Caco-2 (cell line): ENCODE measurements at regions of chr12 and their contacts with region 1.

Region 1: DNA sequence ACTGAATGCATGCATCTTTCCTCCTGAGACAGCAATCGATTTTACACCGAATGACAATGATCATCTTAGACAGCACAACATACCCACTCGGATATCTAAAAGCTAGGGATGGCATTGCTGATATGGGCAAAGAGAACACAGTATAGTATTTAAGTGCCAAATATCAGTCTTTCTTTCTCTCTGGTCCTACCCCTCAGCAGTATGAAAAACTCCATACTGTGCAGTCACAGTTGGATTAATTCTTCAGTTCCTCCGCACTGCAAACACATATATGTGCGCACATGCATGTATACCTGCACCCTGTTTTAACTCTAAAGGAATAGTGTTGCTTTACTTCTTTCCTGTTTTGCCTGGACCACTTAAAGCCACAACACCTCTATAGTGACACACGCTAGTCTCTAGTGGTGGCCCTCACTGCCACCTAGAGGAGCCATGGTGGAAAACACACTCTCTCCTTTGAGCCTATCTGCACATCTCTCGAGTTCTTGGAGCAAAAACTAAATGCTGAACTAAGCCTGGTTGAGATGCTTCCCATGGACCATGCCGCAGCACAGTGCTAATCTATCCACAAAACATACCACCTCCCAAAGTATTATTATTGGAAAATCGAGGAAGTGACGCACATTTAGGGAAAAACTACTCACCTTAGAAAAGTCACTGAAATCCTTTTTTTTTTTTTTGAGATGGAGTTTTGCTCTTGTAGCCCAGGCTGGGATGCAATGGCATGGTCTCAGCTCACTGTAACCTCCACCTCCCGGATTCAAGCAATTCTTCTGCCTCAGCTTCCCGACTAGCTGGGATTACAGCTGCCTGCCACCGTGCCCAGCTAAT is 11.9 kb downstream of the TMEM52B start:
- DNase-seq: peak; percentile 79 to 81
- H3K4me3 ChIP-seq: no peak overlapping the region
- H3K4me3 Mint-ChIP-seq: no peak overlapping the region
- H3K27ac Mint-ChIP-seq: peak overlapping the region; percentile 4
- H3K4me1 ChIP-seq: peaks cover 34% of the 10 kb centered on the region
- H3K4me1 Mint-ChIP-seq: peaks cover 50% of the 10 kb centered on the region
- H3K27me3 ChIP-seq: no peaks in the 10 kb centered on the region
- H3K27me3 Mint-ChIP-seq: no peaks in the 10 kb centered on the region
- CTCF ChIP-seq: peak; percentile 79 to 96

Region 2: DNA sequence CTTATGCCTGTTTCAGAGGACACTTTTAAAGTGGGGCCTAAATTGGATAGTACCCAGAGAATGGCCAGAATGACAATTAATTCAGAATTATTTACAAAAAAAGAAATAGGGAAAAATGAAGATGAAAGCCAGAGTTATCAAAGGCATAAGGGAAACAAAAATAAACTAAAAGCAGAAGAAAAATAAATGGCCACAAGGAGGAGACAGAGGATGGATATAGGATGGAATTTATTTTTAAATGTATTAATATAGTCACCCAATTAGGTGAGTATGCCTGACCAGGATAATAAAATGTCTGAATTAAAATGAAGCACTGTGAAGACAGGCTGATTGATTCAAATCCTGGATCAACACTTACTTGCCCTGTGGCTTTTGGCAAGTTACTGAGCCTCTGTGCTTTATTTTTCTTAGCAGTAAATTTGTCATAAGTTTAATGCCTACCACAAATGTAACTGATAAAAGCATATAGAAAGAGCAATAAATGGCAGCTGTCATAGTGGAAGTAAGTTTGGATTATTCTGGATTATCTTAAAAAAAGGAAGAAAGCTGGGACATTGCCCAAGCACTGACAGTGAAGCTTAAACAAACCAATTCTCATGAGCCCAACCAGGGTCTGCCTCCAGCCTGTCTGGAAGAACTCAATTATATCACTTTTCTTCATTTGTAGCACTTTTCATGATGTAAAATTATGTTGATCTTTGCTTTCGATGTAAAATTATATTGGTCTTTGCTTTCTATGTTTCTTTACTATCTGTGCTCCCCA is 156.8 kb before region 1 on chr12:
- CTCF ChIA-PET with region 1: interaction called, 3 read pairs
- POLR2A ChIA-PET with region 1: no interaction called
- intact Hi-C with region 1: loop called (anchors 2 kb)
- DNase-seq: no peak
- H3K4me3 ChIP-seq: no peak overlapping the region
- H3K4me3 Mint-ChIP-seq: no peak overlapping the region
- H3K27ac Mint-ChIP-seq: no peak overlapping the region
- H3K4me1 ChIP-seq: no peaks in the 10 kb centered on the region
- H3K4me1 Mint-ChIP-seq: no peaks in the 10 kb centered on the region
- H3K27me3 ChIP-seq: no peaks in the 10 kb centered on the region
- H3K27me3 Mint-ChIP-seq: peaks cover 6% of the 10 kb centered on the region
- CTCF ChIP-seq: peak; percentile 33 to 69

Region 3: GRCh38 chr12:10167588-10167987 is 23.2 kb before region 1 on chr12:
- CTCF ChIA-PET with region 1: interaction called, 3 read pairs
- POLR2A ChIA-PET with region 1: interaction called, 10 read pairs
- intact Hi-C with region 1: loop called (anchors 2 kb)
- DNase-seq: peak; percentile 71 to 86
- H3K4me3 ChIP-seq: no peak overlapping the region
- H3K4me3 Mint-ChIP-seq: peak overlapping the region; percentile 25
- H3K27ac Mint-ChIP-seq: peak overlapping the region; percentile 73
- H3K4me1 ChIP-seq: peaks cover 76% of the 10 kb centered on the region
- H3K4me1 Mint-ChIP-seq: peaks cover 43% of the 10 kb centered on the region
- H3K27me3 ChIP-seq: no peaks in the 10 kb centered on the region
- H3K27me3 Mint-ChIP-seq: no peaks in the 10 kb centered on the region
- CTCF ChIP-seq: no peak

Region 4: DNA sequence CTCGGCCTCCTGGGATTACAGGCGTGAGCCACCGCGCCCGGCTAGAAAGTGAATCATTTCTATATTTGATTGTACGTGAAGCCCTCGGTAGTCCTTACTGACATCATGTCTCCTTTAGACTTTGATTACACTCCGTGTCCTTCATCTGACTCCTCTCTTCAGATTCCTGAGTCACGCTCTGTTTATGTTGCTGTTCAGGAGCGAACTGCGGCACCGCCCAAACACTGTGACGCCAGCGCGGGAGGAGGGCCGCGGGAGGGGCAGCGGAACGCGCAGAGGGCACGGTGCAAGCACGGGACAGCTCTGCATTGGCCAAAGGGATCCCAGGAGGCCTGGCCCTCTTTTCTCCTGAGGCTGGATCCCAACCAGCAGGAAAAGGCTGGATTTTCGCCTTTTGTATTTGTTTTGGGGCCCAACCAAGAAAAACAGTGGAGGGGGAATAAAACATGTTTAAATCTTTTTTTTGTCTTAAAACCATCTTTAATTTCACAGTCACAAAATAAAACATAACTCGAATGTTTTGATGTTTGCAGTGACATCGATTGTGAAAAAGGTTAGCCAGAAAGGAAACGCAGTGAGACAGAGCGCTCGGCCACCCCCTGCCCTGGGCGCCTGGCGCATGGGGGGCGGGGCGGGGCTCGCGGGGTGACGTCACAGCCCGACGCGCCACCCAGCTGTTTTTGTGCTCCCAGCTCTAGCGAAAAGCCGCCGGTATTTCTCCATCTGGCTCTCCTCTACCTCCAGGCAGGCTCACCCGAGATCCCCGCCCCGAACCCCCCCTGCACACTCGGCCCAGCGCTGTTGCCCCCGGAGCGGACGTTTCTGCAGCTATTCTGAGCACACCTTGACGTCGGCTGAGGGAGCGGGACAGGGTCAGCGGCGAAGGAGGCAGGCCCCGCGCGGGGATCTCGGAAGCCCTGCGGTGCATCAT is 21.7 kb after region 1 on chr12 and contains the start of gene GABARAPL1:
- CTCF ChIA-PET with region 1: no interaction called
- POLR2A ChIA-PET with region 1: no interaction called
- intact Hi-C with region 1: loop called (anchors 1 kb)
- DNase-seq: peak; percentile 97 to 98
- H3K4me3 ChIP-seq: peak within 1 kb of the TSS; percentile 92
- H3K4me3 Mint-ChIP-seq: peak within 1 kb of the TSS; percentile 80
- H3K27ac Mint-ChIP-seq: peak within 1 kb of the TSS; percentile 99
- H3K4me1 ChIP-seq: peaks cover 24% of the 10 kb centered on the region
- H3K4me1 Mint-ChIP-seq: peaks cover 28% of the 10 kb centered on the region
- H3K27me3 ChIP-seq: no peaks in the 10 kb centered on the region
- H3K27me3 Mint-ChIP-seq: no peaks in the 10 kb centered on the region
- CTCF ChIP-seq: no peak
- total RNA-seq, gene GABARAPL1: 106 TPM in 2 replicates